Prostate gland (tissue), 2 donors: ENCODE measurements at regions of chr20 and their contacts with region 1.

Region 1: GRCh38 chr20:24241466-24241865 is 228.0 kb upstream of the SYNDIG1 start:
- DNase-seq: no peak
- H3K4me3 ChIP-seq: no peak overlapping the region
- H3K27ac ChIP-seq: no peak overlapping the region
- H3K4me1 ChIP-seq: no peaks in the 10 kb centered on the region
- H3K27me3 ChIP-seq: no peaks in the 10 kb centered on the region
- CTCF ChIP-seq: no peak
- POLR2A ChIP-seq: no peak

Region 2: DNA sequence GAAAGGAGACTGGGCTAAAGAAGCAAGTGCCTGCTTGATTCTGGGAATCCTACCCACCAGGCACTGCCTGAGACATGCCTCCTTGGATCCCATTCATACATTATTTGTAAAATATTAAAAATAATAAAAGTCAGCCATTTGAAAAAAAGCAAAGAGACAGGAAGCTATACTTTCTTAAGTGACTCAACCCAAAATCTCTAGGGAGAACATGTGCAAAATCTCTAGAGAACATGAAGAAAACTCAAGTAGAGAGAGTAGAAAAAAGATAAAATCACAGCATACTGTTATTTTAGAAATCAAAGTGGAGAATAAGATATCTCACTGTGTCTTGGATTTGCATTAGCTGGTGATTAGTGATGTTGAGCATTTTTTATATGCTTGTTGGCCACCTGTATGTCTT is 55.7 kb before region 1 on chr20:
- intact Hi-C with region 1: loop called (anchors 10 kb)
- DNase-seq: no peak
- H3K4me3 ChIP-seq: no peak overlapping the region
- H3K27ac ChIP-seq: no peak overlapping the region
- H3K4me1 ChIP-seq: no peaks in the 10 kb centered on the region
- H3K27me3 ChIP-seq: no peaks in the 10 kb centered on the region
- CTCF ChIP-seq: no peak
- POLR2A ChIP-seq: no peak

Region 3: GRCh38 chr20:24289737-24290481 is 48.4 kb after region 1 on chr20:
- intact Hi-C with region 1: no loop called
- DNase-seq: no peak
- H3K4me3 ChIP-seq: no peak overlapping the region
- H3K27ac ChIP-seq: no peak overlapping the region
- H3K4me1 ChIP-seq: no peaks in the 10 kb centered on the region
- H3K27me3 ChIP-seq: no peaks in the 10 kb centered on the region
- CTCF ChIP-seq: no peak
- POLR2A ChIP-seq: no peak

Region 4: DNA sequence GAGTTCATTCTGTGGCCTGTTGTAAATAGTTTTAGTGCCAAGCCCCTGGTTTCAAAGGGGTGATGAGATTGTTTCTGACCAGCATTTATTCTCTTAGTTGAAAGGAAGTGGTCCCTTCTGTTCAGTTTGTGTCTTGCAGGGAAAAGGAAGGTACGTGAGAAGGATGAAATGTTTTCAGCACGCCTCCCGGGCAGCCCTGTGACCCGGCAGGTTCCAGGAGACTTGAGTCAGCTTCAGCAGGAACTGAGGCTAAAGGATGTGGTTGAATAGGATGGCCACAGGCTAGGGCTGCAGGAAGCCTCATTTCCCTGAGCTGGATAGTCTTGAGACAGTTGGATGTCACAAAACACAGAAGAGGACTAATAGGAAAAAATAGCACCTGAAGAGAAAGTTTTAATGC is 95.6 kb after region 1 on chr20:
- intact Hi-C with region 1: no loop called
- DNase-seq: no peak
- H3K4me3 ChIP-seq: no peak overlapping the region
- H3K27ac ChIP-seq: no peak overlapping the region
- H3K4me1 ChIP-seq: no peaks in the 10 kb centered on the region
- H3K27me3 ChIP-seq: no peaks in the 10 kb centered on the region
- CTCF ChIP-seq: no peak
- POLR2A ChIP-seq: no peak